Activated CD4-positive, alpha-beta memory T cell treated with anti-CD3 and anti-CD28 coated beads for 36 hours (primary cell): ENCODE measurements at regions of chr2 and their contacts with region 1.

Region 1: DNA sequence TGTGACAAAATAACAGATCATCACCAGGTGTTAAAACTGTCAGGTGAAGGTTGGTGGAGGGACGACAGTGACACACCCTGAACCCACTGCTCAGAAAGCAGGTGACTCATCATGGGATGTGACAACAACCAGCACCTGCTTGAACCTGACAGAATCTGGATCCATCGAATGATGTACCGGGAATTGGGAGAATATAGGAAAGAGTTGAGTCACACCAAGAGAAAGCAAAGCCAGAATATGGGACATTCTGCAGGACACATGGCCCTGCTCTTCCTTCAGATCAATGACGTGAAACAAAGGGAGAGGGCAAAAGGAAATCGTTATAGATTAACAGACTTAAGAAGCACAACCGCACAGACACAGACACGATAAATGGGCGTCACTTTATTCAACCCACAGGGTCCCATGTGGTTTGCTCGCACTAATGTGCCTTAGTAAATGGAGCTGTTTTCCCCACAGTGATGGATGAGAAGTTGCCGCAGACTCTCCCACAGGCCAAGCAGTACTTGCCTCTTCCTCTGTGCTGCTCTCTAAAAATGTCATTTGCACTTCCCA is 100.1 kb downstream of the CRACDL start:
- DNase-seq: peak; percentile 56
- H3K4me3 Mint-ChIP-seq: peak overlapping the region; percentile 6
- H3K27ac Mint-ChIP-seq: peak overlapping the region; percentile 21
- H3K4me1 Mint-ChIP-seq: peaks cover 35% of the 10 kb centered on the region
- H3K27me3 Mint-ChIP-seq: no peaks in the 10 kb centered on the region

Region 2: DNA sequence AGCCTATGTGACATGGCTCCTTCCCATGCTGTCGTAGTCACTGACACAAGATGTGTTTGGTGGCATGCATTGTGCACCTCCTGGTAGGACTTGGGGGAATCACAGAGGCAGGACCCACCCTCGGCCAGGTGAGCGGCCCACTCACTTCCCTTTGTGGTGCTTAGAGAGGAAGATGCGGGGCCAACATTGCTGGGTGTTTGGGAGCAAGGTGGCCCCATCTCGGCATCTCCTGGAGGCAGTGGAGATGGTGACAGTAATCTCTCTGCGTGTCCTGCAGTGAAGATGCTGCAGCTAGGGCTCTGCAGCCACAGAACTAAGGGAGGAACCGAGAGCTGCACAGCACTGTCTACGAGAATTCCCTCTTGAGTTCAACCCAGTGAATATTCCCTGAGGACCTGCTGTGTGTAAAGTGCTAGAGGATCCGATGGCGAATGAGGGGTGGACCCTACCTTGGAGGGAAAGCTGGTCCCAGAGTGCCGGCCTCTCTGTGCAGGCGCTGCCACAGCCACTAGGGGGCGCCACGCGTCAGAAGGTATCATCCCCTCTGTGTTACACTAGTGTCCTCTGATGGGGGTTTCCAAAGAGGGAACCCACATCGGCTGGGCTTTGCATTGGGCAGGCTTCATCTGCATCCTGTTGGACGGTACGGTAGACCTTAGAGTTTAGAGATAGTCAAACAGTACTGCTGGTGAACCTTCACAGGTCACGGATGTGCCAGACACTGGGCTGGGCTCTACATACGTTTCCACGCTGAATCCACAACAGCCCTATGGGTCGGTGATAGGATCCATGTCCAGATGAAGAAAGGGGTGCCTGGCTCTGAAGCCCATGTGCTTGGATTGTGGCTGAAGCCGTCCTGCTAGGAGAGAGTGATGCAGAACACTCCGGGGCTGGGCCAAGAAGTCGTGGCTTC is 266.8 kb before region 1 on chr2:
- CTCF ChIA-PET with region 1: interaction called, 18 read pairs
- POLR2A ChIA-PET with region 1: no interaction called
- intact Hi-C with region 1: loop called (anchors 1 kb)
- DNase-seq: peak; percentile 80
- H3K4me3 Mint-ChIP-seq: no peak overlapping the region
- H3K27ac Mint-ChIP-seq: peak overlapping the region; percentile 49
- H3K4me1 Mint-ChIP-seq: no peaks in the 10 kb centered on the region
- H3K27me3 Mint-ChIP-seq: no peaks in the 10 kb centered on the region

Region 3: GRCh38 chr2:98643501-98644100 is 192.3 kb before region 1 on chr2:
- CTCF ChIA-PET with region 1: interaction called, 92 read pairs
- POLR2A ChIA-PET with region 1: no interaction called
- intact Hi-C with region 1: no loop called
- DNase-seq: no peak
- H3K4me3 Mint-ChIP-seq: no peak overlapping the region
- H3K27ac Mint-ChIP-seq: peak overlapping the region; percentile 23
- H3K4me1 Mint-ChIP-seq: peaks cover 2% of the 10 kb centered on the region
- H3K27me3 Mint-ChIP-seq: no peaks in the 10 kb centered on the region

Region 4: DNA sequence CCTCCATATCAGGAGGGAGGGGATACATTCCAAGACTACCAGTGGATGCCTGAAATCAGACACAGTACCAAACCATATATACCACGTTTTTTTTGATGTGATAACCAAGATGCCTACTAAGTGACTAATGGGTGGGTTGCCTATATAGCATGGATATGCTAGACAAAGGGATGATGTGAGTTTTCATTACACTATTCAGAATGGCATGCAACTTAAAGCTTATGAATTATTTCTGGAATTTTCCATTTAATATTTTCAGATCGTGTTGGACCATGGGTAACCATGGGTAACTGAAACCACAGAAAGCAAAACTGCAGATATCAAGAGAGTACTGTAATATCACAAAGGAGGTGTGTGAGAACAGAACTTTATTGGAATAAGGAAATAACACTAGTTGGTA is 139.7 kb after region 1 on chr2:
- CTCF ChIA-PET with region 1: no interaction called
- POLR2A ChIA-PET with region 1: no interaction called
- intact Hi-C with region 1: no loop called
- DNase-seq: no peak
- H3K4me3 Mint-ChIP-seq: no peak overlapping the region
- H3K27ac Mint-ChIP-seq: no peak overlapping the region
- H3K4me1 Mint-ChIP-seq: no peaks in the 10 kb centered on the region
- H3K27me3 Mint-ChIP-seq: peaks cover 9% of the 10 kb centered on the region

Region 5: DNA sequence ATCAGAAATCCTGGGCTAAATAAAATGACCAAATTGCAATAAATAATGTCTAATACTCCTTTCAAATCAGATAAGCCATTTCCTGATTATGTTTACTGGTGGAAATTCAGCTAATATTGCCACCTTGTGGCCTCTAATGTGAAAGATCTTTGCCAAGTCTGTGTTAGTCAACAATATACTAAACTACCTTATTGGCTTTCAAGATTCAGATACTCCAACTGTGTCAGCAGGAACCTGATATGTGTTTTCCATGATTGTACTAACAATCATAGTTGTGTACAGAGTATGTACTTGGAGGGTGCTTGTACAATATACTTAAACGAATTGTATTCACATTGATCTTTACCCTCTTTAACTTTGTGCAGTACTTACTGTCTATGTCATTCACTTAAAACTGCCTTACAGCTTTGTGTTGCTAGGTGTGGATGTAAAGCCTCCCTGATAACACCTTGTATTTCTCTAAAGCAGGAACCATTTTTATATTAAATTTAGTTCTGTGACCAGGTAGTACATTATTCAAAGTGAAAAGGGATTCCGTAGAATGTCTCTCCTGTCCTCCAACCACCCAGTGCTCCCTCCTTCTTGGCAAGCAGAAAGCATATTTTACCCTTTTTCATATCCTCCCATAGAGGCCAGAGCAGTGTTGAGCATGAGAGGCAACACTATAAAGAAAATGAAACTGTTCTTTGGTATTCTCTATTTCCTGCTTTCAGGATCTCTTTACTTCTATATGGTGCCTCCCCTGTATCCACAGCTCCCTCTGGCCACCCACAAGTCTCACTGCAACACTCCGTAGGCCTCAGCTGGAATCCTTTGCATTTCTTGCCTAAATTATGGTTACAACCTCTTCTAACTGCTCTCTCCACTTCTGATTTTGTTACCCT is 230.4 kb after region 1 on chr2:
- CTCF ChIA-PET with region 1: interaction called, 4 read pairs
- POLR2A ChIA-PET with region 1: no interaction called
- intact Hi-C with region 1: loop called (anchors 2 kb)
- DNase-seq: peak; percentile 46
- H3K4me3 Mint-ChIP-seq: no peak overlapping the region
- H3K27ac Mint-ChIP-seq: no peak overlapping the region
- H3K4me1 Mint-ChIP-seq: no peaks in the 10 kb centered on the region
- H3K27me3 Mint-ChIP-seq: no peaks in the 10 kb centered on the region

Region 6: DNA sequence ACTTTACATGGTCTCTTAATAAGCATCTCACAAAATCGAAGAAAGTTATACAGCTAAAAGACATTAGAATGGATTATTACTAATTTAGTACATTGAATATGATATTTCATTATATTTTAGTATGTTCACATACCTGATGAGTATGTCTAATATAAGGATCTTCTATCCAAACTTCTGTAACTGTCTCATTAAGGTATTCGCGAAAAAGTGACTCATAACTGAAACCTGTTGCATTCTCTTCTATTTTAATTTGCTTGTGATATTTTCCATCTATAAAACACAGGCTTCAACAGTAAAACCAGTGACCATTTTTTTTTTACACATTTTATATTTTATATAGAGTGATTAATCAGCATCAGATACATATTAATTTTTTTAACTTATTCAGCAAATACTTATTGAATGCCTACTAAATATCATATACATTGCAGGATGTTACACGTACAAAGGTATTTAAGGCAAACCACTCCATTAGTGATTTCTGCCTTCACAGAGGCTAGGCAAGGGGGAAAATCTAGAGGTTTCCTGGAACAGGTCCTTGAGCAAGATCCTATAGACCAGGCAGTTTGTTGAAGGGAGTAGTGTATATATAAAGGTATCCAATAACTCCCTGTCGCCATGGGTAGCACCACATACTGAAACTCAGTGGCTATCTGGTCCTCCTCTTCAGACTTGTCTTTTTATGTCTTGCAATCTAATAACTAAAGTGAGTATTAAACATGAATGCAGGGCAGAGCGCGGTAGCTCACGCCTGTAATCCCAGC is 335.7 kb after region 1 on chr2:
- CTCF ChIA-PET with region 1: no interaction called
- POLR2A ChIA-PET with region 1: no interaction called
- intact Hi-C with region 1: loop called (anchors 10 kb)
- DNase-seq: no peak
- H3K4me3 Mint-ChIP-seq: no peak overlapping the region
- H3K27ac Mint-ChIP-seq: peak overlapping the region; percentile 49
- H3K4me1 Mint-ChIP-seq: peaks cover 34% of the 10 kb centered on the region
- H3K27me3 Mint-ChIP-seq: no peaks in the 10 kb centered on the region